Ovary (tissue), 10 donors: ENCODE measurements at regions of chr12 and their contacts with region 1.

Region 1: DNA sequence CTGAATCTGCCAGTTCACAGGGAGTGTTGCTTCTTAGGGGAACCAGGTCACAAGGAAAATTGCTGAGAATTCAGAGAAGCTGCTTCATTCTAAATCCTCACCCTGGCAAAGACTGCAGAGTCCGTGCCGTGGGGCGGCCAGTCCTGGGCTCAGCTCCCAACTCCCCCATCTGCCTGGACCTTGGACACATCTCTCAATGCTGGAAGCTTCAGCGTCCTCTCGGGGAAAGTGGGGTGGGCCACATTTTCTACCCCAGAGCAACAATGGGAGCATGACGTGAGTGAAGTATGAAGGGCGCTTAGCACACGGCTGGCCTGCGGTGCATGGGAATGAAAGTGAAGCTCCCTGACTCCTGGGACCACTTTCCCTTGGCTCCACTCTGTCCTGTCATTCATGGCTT is 31.2 kb downstream of the HVCN1 start:
- DNase-seq: peak in 2 of 5 donors; percentile 31 to 57
- H3K4me3 ChIP-seq: no peak overlapping the region
- H3K27ac ChIP-seq: peak overlapping the region in 1 of 2 donors; percentile 4
- H3K4me1 ChIP-seq: no peaks in the 10 kb centered on the region
- H3K27me3 ChIP-seq: no peaks in the 10 kb centered on the region
- CTCF ChIP-seq: no peak
- EP300 ChIP-seq: no peak
- POLR2A ChIP-seq: no peak

Region 2: GRCh38 chr12:110860833-110861296 is 203.1 kb after region 1 on chr12:
- intact Hi-C with region 1: no loop called
- DNase-seq: no peak
- H3K4me3 ChIP-seq: no peak overlapping the region
- H3K27ac ChIP-seq: no peak overlapping the region
- H3K4me1 ChIP-seq: no peaks in the 10 kb centered on the region
- H3K27me3 ChIP-seq: no peaks in the 10 kb centered on the region
- CTCF ChIP-seq: no peak
- EP300 ChIP-seq: no peak
- POLR2A ChIP-seq: no peak

Region 3: GRCh38 chr12:112314981-112315380 is 1657.2 kb after region 1 on chr12:
- intact Hi-C with region 1: loop called in 1 of 4 experiments (anchors 5 kb)
- DNase-seq: no peak
- H3K4me3 ChIP-seq: no peak overlapping the region
- H3K27ac ChIP-seq: no peak overlapping the region
- H3K4me1 ChIP-seq: no peaks in the 10 kb centered on the region
- H3K27me3 ChIP-seq: no peaks in the 10 kb centered on the region
- CTCF ChIP-seq: no peak
- EP300 ChIP-seq: no peak
- POLR2A ChIP-seq: no peak